ENCODE measurements at regions of chr14 and their contacts with region 1.

Region 1: DNA sequence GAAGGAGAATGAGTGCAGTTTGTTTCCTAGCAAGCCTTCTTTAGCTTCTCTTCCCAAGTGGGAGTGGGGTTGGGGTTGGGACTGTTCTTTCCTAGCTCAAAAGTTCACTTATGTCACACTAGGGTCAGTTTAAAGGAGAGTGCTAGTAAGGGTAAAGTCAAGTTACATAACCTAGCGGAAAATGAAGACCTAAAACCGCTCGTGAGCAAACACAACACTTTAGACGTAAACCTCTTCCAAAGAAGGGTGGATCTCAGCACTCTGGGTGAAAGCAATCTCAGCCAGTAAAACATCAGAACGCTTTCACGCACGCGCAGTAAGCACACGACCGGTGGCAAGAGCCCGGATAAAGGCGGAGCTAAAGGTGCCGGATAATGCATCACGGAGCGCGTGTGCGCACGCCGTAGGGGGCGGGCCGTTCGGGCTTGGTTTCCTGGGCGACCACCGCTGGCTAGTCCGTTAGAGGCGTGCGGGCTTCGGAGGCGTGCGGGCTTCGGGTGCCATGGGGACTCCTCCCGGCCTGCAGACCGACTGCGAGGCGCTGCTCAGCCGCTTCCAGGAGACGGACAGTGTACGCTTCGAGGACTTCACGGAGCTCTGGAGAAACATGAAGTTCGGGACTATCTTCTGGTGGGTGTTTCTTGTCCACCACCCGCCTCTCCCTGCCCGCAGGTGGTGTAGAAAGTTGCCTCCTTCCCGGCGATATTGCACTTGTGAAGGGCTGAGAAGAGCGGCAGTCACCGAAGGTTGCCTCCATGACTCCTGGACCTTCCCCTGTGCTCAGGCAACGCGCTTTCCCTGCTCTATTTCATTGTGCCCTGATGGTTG is at the start of gene SNAPC1:
- DNase-seq: peak; percentile 96 to 100 (median 98)
- ATAC-seq: peak; percentile 91
- H3K4me3 ChIP-seq: peak within 1 kb of the TSS; percentile 87 to 90
- H3K4me3 Mint-ChIP-seq: peak within 1 kb of the TSS; percentile 98
- H3K27ac ChIP-seq: peak within 1 kb of the TSS; percentile 84 to 95
- H3K27ac Mint-ChIP-seq: peak within 1 kb of the TSS; percentile 100
- H3K4me1 ChIP-seq: peaks cover 31% of the 10 kb centered on the region
- H3K4me1 Mint-ChIP-seq: peaks cover 48% of the 10 kb centered on the region
- H3K27me3 ChIP-seq: no peaks in the 10 kb centered on the region
- H3K27me3 Mint-ChIP-seq: no peaks in the 10 kb centered on the region
- CTCF ChIP-seq: no peak
- total RNA-seq, gene SNAPC1: 6.8 to 7.4 TPM

Region 2: GRCh38 chr14:60989599-60989998 is 772.6 kb before region 1 on chr14:
- CTCF ChIA-PET with region 1: no interaction called
- POLR2A ChIA-PET with region 1: no interaction called
- intact Hi-C with region 1: loop called in 1 of 2 experiments (anchors 5 kb)
- DNase-seq: no peak
- ATAC-seq: no peak
- H3K4me3 ChIP-seq: no peak overlapping the region
- H3K4me3 Mint-ChIP-seq: no peak overlapping the region
- H3K27ac ChIP-seq: no peak overlapping the region
- H3K27ac Mint-ChIP-seq: no peak overlapping the region
- H3K4me1 ChIP-seq: no peaks in the 10 kb centered on the region
- H3K4me1 Mint-ChIP-seq: peaks cover 6% of the 10 kb centered on the region
- H3K27me3 ChIP-seq: no peaks in the 10 kb centered on the region
- H3K27me3 Mint-ChIP-seq: no peaks in the 10 kb centered on the region
- CTCF ChIP-seq: no peak

Region 3: DNA sequence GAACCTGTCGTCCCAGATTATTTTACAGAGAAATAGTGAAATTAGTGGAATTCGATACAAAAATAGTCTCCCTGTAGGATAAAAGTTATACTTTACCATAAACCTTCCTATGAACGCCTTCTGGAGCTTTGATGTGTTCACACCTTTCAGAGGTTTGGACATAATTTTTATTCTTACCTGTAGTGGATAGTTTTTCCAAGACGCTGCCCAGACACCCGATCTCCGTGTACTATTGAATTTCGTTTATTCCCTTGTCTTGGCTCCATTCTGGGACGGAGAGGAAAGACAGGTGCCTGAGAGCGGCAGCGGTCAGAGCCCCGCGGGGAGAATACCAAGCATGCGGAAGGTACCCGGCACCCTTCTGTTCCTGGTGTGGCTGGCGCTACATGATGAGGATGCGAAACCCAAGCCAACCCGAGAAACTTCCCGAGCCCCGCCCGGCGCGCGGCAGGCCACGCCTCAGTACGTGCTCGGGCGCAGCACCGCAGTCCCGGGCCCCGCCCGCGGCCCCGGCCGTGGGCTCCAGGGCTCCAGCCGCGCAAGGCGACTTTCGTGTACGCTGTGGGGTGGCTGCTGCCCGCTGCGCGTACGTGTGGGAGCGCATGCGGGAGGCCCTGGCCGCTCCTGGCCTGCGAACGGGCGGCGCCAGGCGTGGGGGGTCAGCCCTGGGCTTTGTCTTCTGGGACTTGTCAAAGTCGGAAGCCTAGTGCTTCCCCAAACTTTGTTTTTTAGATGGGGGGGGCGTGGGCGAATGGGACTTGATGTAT is 11.3 kb before region 1 on chr14:
- CTCF ChIA-PET with region 1: interaction called, 6 read pairs
- POLR2A ChIA-PET with region 1: interaction called, 19 read pairs
- intact Hi-C with region 1: loop called in 1 of 2 experiments (anchors 1 kb)
- DNase-seq: peak; percentile 44 to 90 (median 74)
- ATAC-seq: peak; percentile 96
- H3K4me3 ChIP-seq: peak overlapping the region; percentile 53 to 73
- H3K4me3 Mint-ChIP-seq: peak overlapping the region; percentile 88
- H3K27ac ChIP-seq: peak overlapping the region; percentile 43 to 45
- H3K27ac Mint-ChIP-seq: peak overlapping the region; percentile 80
- H3K4me1 ChIP-seq: peaks cover 4% of the 10 kb centered on the region
- H3K4me1 Mint-ChIP-seq: peaks cover 8% of the 10 kb centered on the region
- H3K27me3 ChIP-seq: no peaks in the 10 kb centered on the region
- H3K27me3 Mint-ChIP-seq: peaks cover 2% of the 10 kb centered on the region
- CTCF ChIP-seq: no peak